ENCODE measurements at regions of chr10 and their contacts with region 1.

Region 1: GRCh38 chr10:102225646-102226541 is at the start of gene ELOVL3:
- DNase-seq: peak; percentile 91
- ATAC-seq: peak; percentile 91
- H3K4me3 Mint-ChIP-seq: peak within 1 kb of the TSS; percentile 37
- H3K27ac Mint-ChIP-seq: no peak within 1 kb of the TSS
- H3K4me1 Mint-ChIP-seq: peaks cover 16% of the 10 kb centered on the region
- H3K27me3 Mint-ChIP-seq: peaks cover 43% of the 10 kb centered on the region
- CTCF ChIP-seq: no peak
- total RNA-seq, gene ELOVL3: not detected

Region 2: DNA sequence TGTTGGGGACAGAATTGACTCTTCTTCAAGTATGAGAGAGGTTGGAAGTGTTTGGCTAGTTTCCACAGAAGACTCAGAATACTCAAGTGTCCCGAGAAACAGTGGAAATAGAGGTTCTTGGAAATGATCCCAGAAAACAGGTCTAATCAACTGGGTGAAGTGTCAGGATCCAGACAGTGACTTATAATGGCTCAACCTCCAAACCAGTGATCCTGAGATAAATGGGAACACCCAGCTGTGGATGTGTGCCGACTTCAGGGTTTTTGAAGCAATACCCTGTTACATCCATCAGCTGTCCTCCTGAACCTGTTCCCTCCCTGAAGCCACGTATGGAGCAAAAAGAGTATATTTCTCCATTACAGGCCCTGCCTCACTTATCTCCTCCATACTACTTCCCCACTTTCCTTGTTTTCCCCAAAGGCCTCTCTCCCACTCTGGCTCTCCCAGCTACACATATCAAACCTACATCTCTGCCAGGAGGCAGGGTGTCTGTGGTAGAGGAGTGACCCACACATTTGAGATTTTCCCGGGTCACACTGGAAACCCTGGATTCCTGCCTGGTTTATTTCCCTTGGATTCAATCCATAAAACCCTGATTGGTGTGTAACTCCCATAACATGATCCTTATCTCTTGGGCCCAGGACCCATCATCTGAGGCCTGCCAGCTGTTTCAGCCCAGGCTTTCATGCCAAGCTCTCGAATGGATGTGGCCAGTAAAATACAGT is 17.4 kb before region 1 on chr10:
- CTCF ChIA-PET with region 1: interaction called, 14 read pairs
- POLR2A ChIA-PET with region 1: no interaction called
- intact Hi-C with region 1: no loop called
- DNase-seq: no peak
- ATAC-seq: no peak
- H3K4me3 Mint-ChIP-seq: no peak overlapping the region
- H3K27ac Mint-ChIP-seq: no peak overlapping the region
- H3K4me1 Mint-ChIP-seq: no peaks in the 10 kb centered on the region
- H3K27me3 Mint-ChIP-seq: no peaks in the 10 kb centered on the region
- CTCF ChIP-seq: no peak

Region 3: DNA sequence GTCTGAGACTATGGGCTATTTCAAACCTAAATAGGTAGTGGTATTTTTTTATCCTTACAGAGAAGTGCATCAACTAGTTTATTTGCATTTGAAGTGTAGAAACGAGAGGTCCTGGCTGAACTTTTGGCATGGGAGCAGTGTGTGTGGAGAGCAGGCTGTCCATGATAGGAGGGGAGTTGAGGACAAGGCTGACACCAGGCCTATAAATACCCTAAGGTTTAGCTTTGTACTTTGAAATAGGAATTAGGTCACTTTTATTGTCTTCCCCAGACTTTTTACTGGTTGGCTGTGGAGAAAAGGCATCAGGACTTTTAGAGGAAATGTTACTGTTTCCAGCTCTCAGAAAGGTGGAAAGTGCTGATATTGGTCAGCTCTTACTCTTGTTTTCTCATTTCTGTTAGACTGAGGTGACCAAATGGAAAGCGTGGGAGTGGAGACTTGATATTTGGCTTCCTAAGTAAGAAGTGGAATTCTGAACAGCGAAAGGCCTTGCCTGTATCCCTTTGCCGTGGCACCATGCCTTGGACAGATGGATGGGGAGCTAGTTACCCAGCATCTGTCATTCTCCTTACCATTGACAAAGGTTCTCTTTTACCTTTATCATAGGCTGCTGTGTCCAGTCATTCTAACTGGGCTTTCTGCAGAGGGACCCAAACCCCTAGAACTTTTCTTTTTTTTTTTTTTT is 65.5 kb after region 1 on chr10:
- CTCF ChIA-PET with region 1: interaction called, 19 read pairs
- POLR2A ChIA-PET with region 1: no interaction called
- intact Hi-C with region 1: no loop called
- DNase-seq: no peak
- ATAC-seq: no peak
- H3K4me3 Mint-ChIP-seq: no peak overlapping the region
- H3K27ac Mint-ChIP-seq: no peak overlapping the region
- H3K4me1 Mint-ChIP-seq: peaks cover 27% of the 10 kb centered on the region
- H3K27me3 Mint-ChIP-seq: no peaks in the 10 kb centered on the region
- CTCF ChIP-seq: no peak

Region 4: DNA sequence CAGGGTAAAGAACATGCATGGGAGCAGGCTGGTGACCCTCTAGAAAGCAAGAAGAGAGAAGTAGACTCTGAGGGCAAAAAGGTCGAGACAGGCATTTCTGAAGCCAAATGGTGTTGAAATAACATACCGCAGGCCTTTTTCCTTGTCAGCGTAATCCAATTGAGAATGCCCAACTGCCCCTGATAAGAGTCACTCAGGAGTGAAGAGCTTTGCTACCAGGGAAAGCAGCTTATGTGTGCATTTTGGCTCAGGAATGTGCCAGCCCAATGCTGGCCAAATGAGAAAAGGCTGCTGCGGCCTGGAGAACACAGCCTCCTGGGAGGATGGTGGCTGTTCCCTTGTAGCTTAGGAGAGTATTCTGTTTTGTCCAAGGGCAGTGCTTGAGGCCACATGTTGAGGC is 108.2 kb after region 1 on chr10:
- CTCF ChIA-PET with region 1: interaction called, 35 read pairs
- POLR2A ChIA-PET with region 1: interaction called, 3 read pairs
- intact Hi-C with region 1: no loop called
- DNase-seq: no peak
- ATAC-seq: no peak
- H3K4me3 Mint-ChIP-seq: no peak overlapping the region
- H3K27ac Mint-ChIP-seq: no peak overlapping the region
- H3K4me1 Mint-ChIP-seq: peaks cover 14% of the 10 kb centered on the region
- H3K27me3 Mint-ChIP-seq: no peaks in the 10 kb centered on the region
- CTCF ChIP-seq: no peak

Region 5: DNA sequence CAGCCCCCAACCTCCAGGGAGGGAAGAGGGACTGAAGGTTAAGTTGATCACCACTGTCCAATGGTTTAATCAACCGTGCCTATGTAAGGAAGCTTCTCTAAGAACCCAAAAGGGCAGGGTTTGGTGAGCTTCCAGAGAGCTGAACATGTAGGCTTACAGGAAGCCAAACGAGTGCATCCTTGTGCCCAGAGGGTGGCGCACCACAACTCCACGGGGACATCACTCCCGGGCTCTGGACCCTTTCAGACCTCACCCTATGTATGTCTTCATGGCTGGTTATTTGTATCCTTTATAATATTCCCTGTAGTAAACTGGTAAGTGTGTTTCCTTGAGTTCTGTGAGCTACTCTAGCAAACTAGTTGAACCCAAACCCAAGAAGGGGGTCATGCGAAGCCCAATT is 158.2 kb after region 1 on chr10:
- CTCF ChIA-PET with region 1: interaction called, 30 read pairs
- POLR2A ChIA-PET with region 1: no interaction called
- intact Hi-C with region 1: no loop called
- DNase-seq: peak; percentile 49
- ATAC-seq: peak; percentile 49
- H3K4me3 Mint-ChIP-seq: no peak overlapping the region
- H3K27ac Mint-ChIP-seq: no peak overlapping the region
- H3K4me1 Mint-ChIP-seq: peaks cover 3% of the 10 kb centered on the region
- H3K27me3 Mint-ChIP-seq: no peaks in the 10 kb centered on the region
- CTCF ChIP-seq: peak; percentile 29

Region 6: GRCh38 chr10:102450194-102450938 is 224.5 kb after region 1 on chr10:
- CTCF ChIA-PET with region 1: interaction called, 25 read pairs
- POLR2A ChIA-PET with region 1: no interaction called
- intact Hi-C with region 1: no loop called
- DNase-seq: peak; percentile 87
- ATAC-seq: peak; percentile 60
- H3K4me3 Mint-ChIP-seq: peak overlapping the region; percentile 96
- H3K27ac Mint-ChIP-seq: peak overlapping the region; percentile 94
- H3K4me1 Mint-ChIP-seq: peaks cover 26% of the 10 kb centered on the region
- H3K27me3 Mint-ChIP-seq: no peaks in the 10 kb centered on the region
- CTCF ChIP-seq: no peak